ENCODE measurements at regions of chr12 and their contacts with region 1.

Region 1: GRCh38 chr12:124567661-124568373 is 405 bp upstream of the NCOR2 start:
- DNase-seq: peak; percentile 93 to 97
- H3K4me3 ChIP-seq: peak overlapping the region; percentile 36 to 92 (median 65)
- H3K27ac ChIP-seq: peak overlapping the region; percentile 72 to 99 (median 86)
- H3K4me1 ChIP-seq: peaks cover 48 to 59% (median 57%) of the 10 kb centered on the region in 4 donors
- H3K27me3 ChIP-seq: no peaks in the 10 kb centered on the region
- CTCF ChIP-seq: no peak
- EP300 ChIP-seq: no peak
- POLR2A ChIP-seq: no peak

Region 2: DNA sequence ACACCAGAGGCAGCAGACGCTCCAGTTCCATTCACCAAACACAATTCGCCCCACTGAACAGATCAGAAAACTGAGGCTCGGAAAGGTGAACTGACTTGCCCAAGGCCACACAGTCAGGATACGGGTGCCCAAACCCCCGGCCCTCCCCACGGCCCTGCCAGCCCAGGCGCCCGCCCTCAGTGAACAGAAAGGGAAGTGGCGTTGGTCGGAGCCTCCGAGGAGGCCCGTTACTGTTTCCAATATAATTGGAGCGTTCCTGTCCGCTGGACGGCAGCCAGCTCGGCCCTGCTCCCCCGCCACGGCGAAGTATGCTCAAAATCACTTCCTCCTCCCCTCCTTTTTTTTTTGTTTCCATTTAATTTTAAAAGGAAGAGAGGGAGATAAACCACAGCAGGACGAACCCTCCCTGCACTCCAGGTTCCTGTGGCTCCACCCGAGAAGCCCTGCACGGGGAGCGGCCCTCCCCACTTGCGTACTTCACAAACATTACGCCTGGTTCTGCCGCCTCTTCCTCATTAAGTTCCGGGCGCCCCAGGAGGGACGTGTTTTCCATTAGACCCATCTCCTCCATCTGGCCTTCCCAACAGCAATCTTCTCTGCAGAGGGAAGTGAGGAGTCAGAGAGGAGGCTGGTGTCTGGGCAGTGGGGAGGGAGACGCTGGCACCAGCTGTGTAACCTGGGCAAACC is 61.5 kb before region 1 on chr12:
- intact Hi-C with region 1: loop called (anchors 10 kb)
- DNase-seq: peak; percentile 74 to 89
- H3K4me3 ChIP-seq: peak overlapping the region in 2 of 4 donors; percentile 17 to 18
- H3K27ac ChIP-seq: peak overlapping the region; percentile 49 to 87 (median 80)
- H3K4me1 ChIP-seq: peaks cover 71 to 95% (median 81%) of the 10 kb centered on the region in 4 donors
- H3K27me3 ChIP-seq: no peaks in the 10 kb centered on the region
- CTCF ChIP-seq: no peak
- EP300 ChIP-seq: no peak
- POLR2A ChIP-seq: no peak

Region 3: GRCh38 chr12:124625867-124626675 is 58.3 kb after region 1 on chr12:
- intact Hi-C with region 1: no loop called
- DNase-seq: peak; percentile 66 to 92
- H3K4me3 ChIP-seq: no peak overlapping the region
- H3K27ac ChIP-seq: peak overlapping the region; percentile 57 to 73 (median 66)
- H3K4me1 ChIP-seq: peaks cover 12 to 36% (median 22%) of the 10 kb centered on the region in 4 donors
- H3K27me3 ChIP-seq: no peaks in the 10 kb centered on the region
- CTCF ChIP-seq: no peak
- EP300 ChIP-seq: no peak
- POLR2A ChIP-seq: no peak